B cell (primary cell): ENCODE measurements at regions of chr15 and their contacts with region 1.

Region 1: GRCh38 chr15:89017370-89018066 is 70.7 kb upstream of the ABHD2 start:
- DNase-seq: peak; percentile 71
- ATAC-seq: peak; percentile 51
- H3K4me3 ChIP-seq: peak overlapping the region in 2 of 5 experiments; percentile 11 to 46
- H3K4me3 Mint-ChIP-seq: peak overlapping the region; percentile 37
- H3K27ac ChIP-seq: no peak overlapping the region
- H3K27ac Mint-ChIP-seq: no peak overlapping the region
- H3K4me1 ChIP-seq: peaks cover 5 to 6% of the 10 kb centered on the region in 2 donors
- H3K4me1 Mint-ChIP-seq: peaks cover 8% of the 10 kb centered on the region
- H3K27me3 ChIP-seq: peaks cover 0 to 16% (median 11%) of the 10 kb centered on the region in 4 experiments
- H3K27me3 Mint-ChIP-seq: peaks cover 49% of the 10 kb centered on the region
- CTCF ChIP-seq: peak; percentile 72

Region 2: DNA sequence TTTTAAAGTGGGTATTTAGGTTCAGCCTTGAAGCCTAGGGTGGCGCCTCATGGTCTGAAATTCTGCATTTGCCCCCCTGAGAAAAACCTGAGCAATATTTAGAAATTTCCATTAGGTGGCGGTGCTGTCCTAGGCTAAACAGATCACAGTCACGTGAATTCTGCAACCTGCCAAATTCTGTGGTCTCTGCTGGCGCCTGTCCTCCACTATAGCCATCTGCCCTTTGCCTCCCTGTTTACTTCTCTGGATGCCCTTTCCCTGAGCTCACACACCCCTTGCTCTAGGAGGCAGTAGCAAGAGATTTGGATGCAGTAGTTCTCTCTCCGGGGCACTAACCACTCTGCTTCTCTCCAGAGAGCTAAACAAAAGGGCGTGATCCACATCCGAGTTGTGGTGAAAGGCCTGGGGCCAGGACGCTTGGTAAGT is 540.9 kb before region 1 on chr15:
- CTCF ChIA-PET with region 1: no interaction called
- POLR2A ChIA-PET with region 1: no interaction called
- intact Hi-C with region 1: loop called (anchors 5 kb)
- DNase-seq: peak; percentile 43
- ATAC-seq: no peak
- H3K4me3 ChIP-seq: no peak overlapping the region
- H3K4me3 Mint-ChIP-seq: no peak overlapping the region
- H3K27ac ChIP-seq: no peak overlapping the region
- H3K27ac Mint-ChIP-seq: no peak overlapping the region
- H3K4me1 ChIP-seq: no peaks in the 10 kb centered on the region
- H3K4me1 Mint-ChIP-seq: peaks cover 3% of the 10 kb centered on the region
- H3K27me3 ChIP-seq: no peaks in the 10 kb centered on the region
- H3K27me3 Mint-ChIP-seq: no peaks in the 10 kb centered on the region
- CTCF ChIP-seq: peak; percentile 56

Region 3: GRCh38 chr15:88904624-88905327 is 112.7 kb before region 1 on chr15:
- CTCF ChIA-PET with region 1: interaction called, 22 read pairs
- POLR2A ChIA-PET with region 1: no interaction called
- intact Hi-C with region 1: loop called (anchors 1 kb)
- DNase-seq: peak; percentile 83
- ATAC-seq: peak; percentile 88
- H3K4me3 ChIP-seq: no peak overlapping the region
- H3K4me3 Mint-ChIP-seq: no peak overlapping the region
- H3K27ac ChIP-seq: no peak overlapping the region
- H3K27ac Mint-ChIP-seq: no peak overlapping the region
- H3K4me1 ChIP-seq: peaks cover 3 to 8% of the 10 kb centered on the region in 2 donors
- H3K4me1 Mint-ChIP-seq: peaks cover 9% of the 10 kb centered on the region
- H3K27me3 ChIP-seq: no peaks in the 10 kb centered on the region
- H3K27me3 Mint-ChIP-seq: no peaks in the 10 kb centered on the region
- CTCF ChIP-seq: peak; percentile 99